ENCODE measurements at regions of chr22 and their contacts with region 1.

Region 1: DNA sequence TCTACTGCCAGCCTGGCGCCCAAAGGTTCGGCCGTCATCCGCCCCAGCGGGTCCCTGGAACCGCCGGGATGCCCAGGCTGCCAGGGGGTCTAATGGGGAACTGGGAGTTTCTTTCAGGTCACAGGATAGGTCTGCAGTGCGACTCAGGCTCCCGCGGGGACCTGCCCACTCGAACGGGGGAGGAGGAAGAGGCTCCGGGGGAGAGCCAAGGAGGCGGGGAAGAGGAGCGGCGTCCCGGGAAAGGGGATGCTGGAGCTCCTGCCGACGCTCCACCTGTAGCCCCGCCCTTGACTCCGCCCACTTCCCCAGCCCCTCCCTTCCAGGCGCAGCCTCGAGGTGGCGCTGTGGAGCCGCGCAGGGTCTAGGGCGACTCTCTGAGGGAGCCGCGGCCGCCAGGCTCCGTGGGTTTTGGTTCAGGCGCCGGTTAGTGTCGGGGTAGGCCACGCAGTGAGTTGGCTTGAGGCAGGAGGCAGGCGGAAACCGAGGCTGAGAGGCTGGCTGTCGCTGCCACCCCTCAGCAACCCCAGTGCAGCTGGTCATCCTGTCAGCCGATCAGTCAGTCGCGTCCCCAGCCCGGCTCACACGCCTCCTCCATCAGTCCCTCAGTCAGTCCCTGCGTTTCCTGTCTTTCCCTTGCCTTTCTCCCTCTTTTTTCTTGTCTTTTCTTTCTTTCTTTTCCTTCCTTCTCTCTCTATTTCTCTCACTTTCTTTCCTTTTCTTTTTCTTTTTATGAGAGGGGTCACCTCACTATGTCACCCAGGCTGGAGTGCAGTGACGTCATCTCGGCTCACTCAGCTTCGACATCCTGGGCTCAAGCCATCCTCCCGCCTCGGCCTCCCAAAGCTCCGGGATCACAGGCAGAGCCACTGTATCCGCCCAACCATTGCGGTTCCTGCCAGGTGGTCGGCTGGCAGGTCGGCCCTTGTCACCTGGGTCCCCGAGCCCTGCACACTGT is 26.4 kb downstream of the YWHAH start:
- DNase-seq: peak; percentile 93
- ATAC-seq: peak; percentile 95
- H3K4me3 Mint-ChIP-seq: peak overlapping the region; percentile 57
- H3K27ac Mint-ChIP-seq: peak overlapping the region; percentile 37
- H3K4me1 Mint-ChIP-seq: peaks cover 11% of the 10 kb centered on the region
- H3K27me3 Mint-ChIP-seq: no peaks in the 10 kb centered on the region

Region 2: DNA sequence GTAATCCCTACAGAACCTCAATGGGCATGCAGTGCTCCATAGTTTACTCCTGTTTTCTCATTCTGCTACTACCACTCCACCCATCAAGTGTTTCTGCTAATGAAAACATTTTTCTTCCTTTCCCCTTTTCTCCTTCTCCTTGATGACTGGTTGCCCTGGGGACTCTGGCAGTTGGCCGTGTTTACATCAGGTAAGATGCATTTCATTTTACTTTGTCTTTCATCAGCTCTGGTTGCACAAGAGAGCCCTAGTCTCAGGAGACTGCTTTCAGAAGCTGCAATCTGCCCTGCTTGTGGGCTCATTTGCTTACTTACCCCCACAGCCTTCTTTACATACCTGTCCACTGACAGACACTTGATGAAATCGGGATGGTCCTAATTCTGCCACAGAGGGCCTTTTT is 778.3 kb before region 1 on chr22:
- CTCF ChIA-PET with region 1: no interaction called
- POLR2A ChIA-PET with region 1: no interaction called
- intact Hi-C with region 1: no loop called
- DNase-seq: no peak
- ATAC-seq: no peak
- H3K4me3 Mint-ChIP-seq: no peak overlapping the region
- H3K27ac Mint-ChIP-seq: no peak overlapping the region
- H3K4me1 Mint-ChIP-seq: peaks cover 3% of the 10 kb centered on the region
- H3K27me3 Mint-ChIP-seq: no peaks in the 10 kb centered on the region

Region 3: GRCh38 chr22:31635638-31636306 is 335.0 kb before region 1 on chr22:
- CTCF ChIA-PET with region 1: interaction called, 10 read pairs
- POLR2A ChIA-PET with region 1: no interaction called
- intact Hi-C with region 1: no loop called
- DNase-seq: no peak
- ATAC-seq: no peak
- H3K4me3 Mint-ChIP-seq: no peak overlapping the region
- H3K27ac Mint-ChIP-seq: peak overlapping the region; percentile 58
- H3K4me1 Mint-ChIP-seq: peaks cover 58% of the 10 kb centered on the region
- H3K27me3 Mint-ChIP-seq: no peaks in the 10 kb centered on the region

Region 4: DNA sequence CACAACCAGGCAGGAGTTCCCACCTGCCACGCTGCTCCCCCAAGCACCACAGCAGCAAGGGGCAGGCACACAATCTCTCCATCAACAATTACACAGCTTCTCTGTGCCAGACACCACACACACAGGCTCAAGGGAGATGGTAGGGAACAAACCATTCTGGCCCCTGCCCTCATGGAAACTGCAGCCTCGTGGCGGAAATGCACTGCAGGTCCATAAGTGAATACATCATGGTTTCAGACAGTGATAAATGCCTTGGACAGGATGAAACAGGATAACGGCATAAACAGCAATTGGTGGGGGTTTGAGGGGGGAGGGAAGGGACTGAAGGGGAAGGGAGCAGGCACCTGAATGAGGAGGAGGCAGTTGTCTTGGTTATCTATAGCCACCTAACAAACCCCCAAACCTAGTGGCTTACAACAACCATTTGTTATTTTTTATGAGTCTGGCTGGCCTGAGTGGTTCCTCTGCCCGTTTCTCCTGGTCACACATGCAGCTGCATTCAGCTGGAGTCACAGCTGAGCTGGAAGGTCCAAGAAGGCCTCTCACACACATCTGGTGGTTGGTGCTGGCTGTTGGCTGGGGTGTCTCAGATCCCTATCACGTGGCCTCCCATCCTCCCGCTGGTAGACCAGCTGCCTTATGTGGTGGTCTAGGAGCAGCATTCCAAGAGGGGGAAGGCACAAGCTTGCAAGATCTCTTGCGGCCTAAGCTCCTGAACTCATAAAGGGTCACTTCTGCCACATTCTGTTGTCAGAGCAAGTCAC is 41.4 kb before region 1 on chr22:
- CTCF ChIA-PET with region 1: no interaction called
- POLR2A ChIA-PET with region 1: no interaction called
- intact Hi-C with region 1: no loop called
- DNase-seq: no peak
- ATAC-seq: no peak
- H3K4me3 Mint-ChIP-seq: no peak overlapping the region
- H3K27ac Mint-ChIP-seq: no peak overlapping the region
- H3K4me1 Mint-ChIP-seq: no peaks in the 10 kb centered on the region
- H3K27me3 Mint-ChIP-seq: peaks cover 15% of the 10 kb centered on the region

Region 5: GRCh38 chr22:31943976-31944699 is 26.6 kb before region 1 on chr22 and contains the start of gene YWHAH:
- CTCF ChIA-PET with region 1: interaction called, 11 read pairs
- POLR2A ChIA-PET with region 1: no interaction called
- intact Hi-C with region 1: loop called (anchors 1 to 2 kb)
- DNase-seq: peak; percentile 96
- ATAC-seq: peak; percentile 73
- H3K4me3 Mint-ChIP-seq: no peak within 1 kb of the TSS
- H3K27ac Mint-ChIP-seq: peak within 1 kb of the TSS; percentile 84
- H3K4me1 Mint-ChIP-seq: peaks cover 21% of the 10 kb centered on the region
- H3K27me3 Mint-ChIP-seq: no peaks in the 10 kb centered on the region
- total RNA-seq, gene YWHAH: 83.2 to 98.5 TPM

Region 6: DNA sequence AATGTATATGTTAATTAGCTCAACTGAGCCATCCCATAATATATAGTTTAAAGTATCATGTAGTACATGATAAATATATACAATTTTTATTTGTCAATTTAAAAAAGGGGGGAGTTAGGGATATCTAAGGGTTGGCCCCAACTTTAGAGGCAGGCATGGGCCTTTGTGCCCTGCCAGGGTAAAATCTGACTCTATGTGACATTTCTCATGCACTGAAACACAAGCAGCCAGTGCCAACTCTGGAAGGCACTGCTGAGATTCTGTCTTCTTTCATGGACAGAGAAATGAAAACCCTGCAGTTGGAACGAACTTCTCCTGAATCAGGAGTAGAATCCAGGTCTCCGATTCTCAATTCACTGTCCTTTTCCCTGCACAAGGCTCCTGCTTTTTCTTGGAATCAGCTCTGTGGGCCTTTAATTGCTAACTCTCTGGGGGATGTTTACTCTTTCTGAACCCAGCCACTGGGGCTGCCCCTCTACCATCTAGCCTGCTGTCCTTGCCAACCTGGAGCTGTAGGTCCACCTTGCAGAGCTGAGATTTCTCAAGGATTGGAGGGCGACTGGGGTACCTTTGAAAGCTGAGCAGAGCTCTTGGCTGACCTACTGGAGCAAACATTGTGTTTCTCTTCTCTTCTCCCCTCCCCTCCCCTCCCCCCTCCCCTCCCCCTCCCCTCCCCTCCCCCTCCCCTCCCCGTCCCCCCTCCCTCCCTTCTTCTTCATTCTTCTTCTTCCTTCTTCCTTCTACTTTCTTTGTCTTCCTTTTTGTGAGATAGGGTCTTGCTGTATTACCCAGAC is 99.0 kb after region 1 on chr22:
- CTCF ChIA-PET with region 1: no interaction called
- POLR2A ChIA-PET with region 1: no interaction called
- intact Hi-C with region 1: no loop called
- DNase-seq: no peak
- ATAC-seq: no peak
- H3K4me3 Mint-ChIP-seq: no peak overlapping the region
- H3K27ac Mint-ChIP-seq: no peak overlapping the region
- H3K4me1 Mint-ChIP-seq: no peaks in the 10 kb centered on the region
- H3K27me3 Mint-ChIP-seq: peaks cover 32% of the 10 kb centered on the region

Region 7: GRCh38 chr22:32080904-32081303 is 110.1 kb after region 1 on chr22:
- CTCF ChIA-PET with region 1: interaction called, 114 read pairs
- POLR2A ChIA-PET with region 1: no interaction called
- intact Hi-C with region 1: no loop called
- DNase-seq: peak; percentile 36
- ATAC-seq: peak; percentile 60
- H3K4me3 Mint-ChIP-seq: no peak overlapping the region
- H3K27ac Mint-ChIP-seq: no peak overlapping the region
- H3K4me1 Mint-ChIP-seq: no peaks in the 10 kb centered on the region
- H3K27me3 Mint-ChIP-seq: peaks cover 5% of the 10 kb centered on the region

Region 8: GRCh38 chr22:32202539-32203180 is 231.9 kb after region 1 on chr22:
- CTCF ChIA-PET with region 1: no interaction called
- POLR2A ChIA-PET with region 1: no interaction called
- intact Hi-C with region 1: loop called in 1 of 2 experiments (anchors 2 kb)
- DNase-seq: peak; percentile 59
- ATAC-seq: peak; percentile 55
- H3K4me3 Mint-ChIP-seq: peak overlapping the region; percentile 63
- H3K27ac Mint-ChIP-seq: no peak overlapping the region
- H3K4me1 Mint-ChIP-seq: peaks cover 21% of the 10 kb centered on the region
- H3K27me3 Mint-ChIP-seq: peaks cover 18% of the 10 kb centered on the region

Region 9: GRCh38 chr22:32796865-32797573 is 826.3 kb after region 1 on chr22:
- CTCF ChIA-PET with region 1: no interaction called
- POLR2A ChIA-PET with region 1: no interaction called
- intact Hi-C with region 1: loop called in 1 of 2 experiments (anchors 10 kb)
- DNase-seq: peak; percentile 81
- ATAC-seq: peak; percentile 95
- H3K4me3 Mint-ChIP-seq: no peak overlapping the region
- H3K27ac Mint-ChIP-seq: no peak overlapping the region
- H3K4me1 Mint-ChIP-seq: peaks cover 2% of the 10 kb centered on the region
- H3K27me3 Mint-ChIP-seq: peaks cover 37% of the 10 kb centered on the region